Breast epithelium (tissue), 4 donors: ENCODE measurements at regions of chr9 and their contacts with region 1.

Region 1: GRCh38 chr9:127714951-127715393 is 491 bp downstream of the PTRH1 start:
- DNase-seq: no peak
- H3K4me3 ChIP-seq: peak overlapping the region; percentile 73 to 88 (median 75)
- H3K27ac ChIP-seq: peak overlapping the region; percentile 86 to 87
- H3K4me1 ChIP-seq: peaks cover 3 to 5% of the 10 kb centered on the region in 2 donors
- H3K27me3 ChIP-seq: no peaks in the 10 kb centered on the region
- CTCF ChIP-seq: no peak
- POLR2A ChIP-seq: no peak

Region 2: GRCh38 chr9:127608104-127608966 is 106.6 kb before region 1 on chr9:
- intact Hi-C with region 1: loop called (anchors 1 kb)
- DNase-seq: peak; percentile 37 to 60
- H3K4me3 ChIP-seq: peak overlapping the region; percentile 14 to 65 (median 51)
- H3K27ac ChIP-seq: peak overlapping the region; percentile 18 to 57
- H3K4me1 ChIP-seq: peaks cover 0 to 13% of the 10 kb centered on the region in 2 donors
- H3K27me3 ChIP-seq: no peaks in the 10 kb centered on the region
- CTCF ChIP-seq: no peak
- POLR2A ChIP-seq: no peak

Region 3: DNA sequence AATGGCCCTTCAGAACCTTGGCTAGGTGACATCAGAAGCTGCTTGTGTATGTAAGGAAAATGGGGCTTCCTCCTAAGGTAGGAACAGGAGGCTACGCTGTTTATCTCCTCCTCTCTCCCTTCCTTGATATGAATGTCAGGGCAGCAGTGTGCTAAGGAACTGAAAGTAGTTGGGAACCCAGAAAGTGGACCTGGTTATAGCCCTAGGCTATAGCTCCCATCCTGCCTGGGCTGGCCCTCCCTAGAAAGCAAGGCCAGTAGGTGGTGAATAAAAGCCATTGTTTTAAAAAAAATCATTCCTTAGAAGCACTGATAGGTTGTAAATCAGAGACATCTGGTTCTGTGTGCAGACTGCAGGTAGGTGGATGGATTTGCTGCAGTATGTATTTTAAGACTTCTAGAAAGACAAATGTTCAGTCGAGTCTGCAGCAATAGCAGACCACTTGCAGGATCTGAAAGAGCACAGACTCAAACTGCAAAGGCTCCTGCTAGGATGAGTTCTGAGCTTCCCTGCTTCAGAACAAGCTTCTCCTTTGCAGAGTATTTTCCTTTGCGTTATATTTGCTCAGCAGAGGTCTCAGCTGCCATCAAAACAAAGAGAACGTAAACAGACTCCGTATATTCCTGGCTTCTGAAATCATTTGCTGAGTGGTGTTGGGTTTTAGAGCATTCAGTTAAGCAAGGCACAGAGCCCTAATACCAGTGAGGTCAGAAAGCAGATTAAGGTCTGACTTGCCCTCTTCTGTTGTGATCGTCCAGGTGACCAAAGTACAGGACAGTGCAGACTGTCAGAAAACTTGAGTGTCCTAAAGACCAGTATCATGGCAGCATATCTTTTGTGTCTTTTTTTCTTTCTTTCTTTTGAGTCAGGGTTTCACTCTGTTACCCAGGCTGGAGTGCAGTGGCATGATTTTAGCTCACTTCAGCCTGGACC is 28.2 kb before region 1 on chr9:
- intact Hi-C with region 1: loop called (anchors 1 kb)
- DNase-seq: no peak
- H3K4me3 ChIP-seq: no peak overlapping the region
- H3K27ac ChIP-seq: peak overlapping the region in 1 of 2 donors; percentile 4
- H3K4me1 ChIP-seq: peaks cover 0 to 4% of the 10 kb centered on the region in 2 donors
- H3K27me3 ChIP-seq: no peaks in the 10 kb centered on the region
- CTCF ChIP-seq: no peak
- POLR2A ChIP-seq: no peak